ENCODE measurements at regions of chr4 and their contacts with region 1.

Region 1: GRCh38 chr4:21307709-21308108 is 607.5 kb downstream of the PACRGL start:
- DNase-seq: no peak
- ATAC-seq: no peak
- H3K4me3 ChIP-seq: no peak overlapping the region
- H3K27ac ChIP-seq: no peak overlapping the region
- H3K4me1 ChIP-seq: no peaks in the 10 kb centered on the region
- H3K27me3 ChIP-seq: peaks cover 0 to 14% of the 10 kb centered on the region in 2 experiments; a peak in 2 of 5 replicates
- CTCF ChIP-seq: no peak
- EP300 ChIP-seq: no peak
- POLR2A ChIP-seq: no peak
- RAD21 ChIP-seq: no peak

Region 2: DNA sequence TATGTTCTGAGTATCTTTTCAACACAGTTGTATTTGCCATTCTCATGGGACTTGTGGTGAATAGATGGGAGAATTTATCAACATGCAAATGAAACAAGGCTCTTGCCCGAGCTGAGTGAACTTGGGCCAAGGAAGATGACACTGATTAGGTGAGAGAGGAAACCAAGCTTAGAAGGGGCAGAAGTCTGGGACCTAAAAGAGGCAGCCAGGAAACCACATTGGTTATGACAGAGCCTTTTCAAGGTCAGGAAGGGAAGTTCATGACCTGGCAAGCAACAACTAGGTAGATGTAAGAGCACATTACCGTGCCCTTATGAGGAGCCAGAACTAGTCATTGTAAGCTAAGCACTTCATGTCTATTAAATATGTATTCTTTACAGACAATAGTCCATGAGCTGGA is 17.1 kb before region 1 on chr4:
- CTCF ChIA-PET with region 1: no interaction called
- POLR2A ChIA-PET with region 1: no interaction called
- in situ Hi-C with region 1: no loop called
- intact Hi-C with region 1: no loop called
- DNase-seq: no peak
- ATAC-seq: no peak
- H3K4me3 ChIP-seq: no peak overlapping the region
- H3K27ac ChIP-seq: no peak overlapping the region
- H3K4me1 ChIP-seq: no peaks in the 10 kb centered on the region
- H3K27me3 ChIP-seq: no peaks in the 10 kb centered on the region
- CTCF ChIP-seq: no peak
- EP300 ChIP-seq: no peak
- POLR2A ChIP-seq: no peak
- RAD21 ChIP-seq: no peak

Region 3: DNA sequence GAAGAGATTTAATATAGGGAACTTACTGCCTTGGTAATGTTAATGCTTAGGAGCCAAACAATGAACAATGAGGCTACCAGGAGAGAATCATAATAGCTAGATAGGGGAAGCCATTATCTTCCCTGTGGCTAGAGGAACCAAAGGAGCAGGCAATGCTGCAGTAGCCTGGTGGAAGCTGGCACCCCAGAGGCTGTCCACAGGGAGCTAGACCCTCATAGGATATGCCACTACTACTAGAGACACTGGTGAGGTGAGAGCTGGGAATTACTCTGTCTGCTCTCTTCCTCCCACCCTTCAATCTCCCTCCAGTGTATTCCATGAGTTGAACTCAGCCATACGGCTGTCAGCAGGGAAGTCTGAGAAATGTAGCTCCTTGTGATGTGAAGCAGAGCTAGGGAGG is 39.4 kb after region 1 on chr4:
- CTCF ChIA-PET with region 1: no interaction called
- POLR2A ChIA-PET with region 1: no interaction called
- in situ Hi-C with region 1: no loop called
- intact Hi-C with region 1: loop called (anchors 1 kb)
- DNase-seq: no peak
- ATAC-seq: no peak
- H3K4me3 ChIP-seq: no peak overlapping the region
- H3K27ac ChIP-seq: no peak overlapping the region
- H3K4me1 ChIP-seq: no peaks in the 10 kb centered on the region
- H3K27me3 ChIP-seq: no peaks in the 10 kb centered on the region
- CTCF ChIP-seq: no peak
- EP300 ChIP-seq: no peak
- POLR2A ChIP-seq: no peak
- RAD21 ChIP-seq: no peak

Region 4: DNA sequence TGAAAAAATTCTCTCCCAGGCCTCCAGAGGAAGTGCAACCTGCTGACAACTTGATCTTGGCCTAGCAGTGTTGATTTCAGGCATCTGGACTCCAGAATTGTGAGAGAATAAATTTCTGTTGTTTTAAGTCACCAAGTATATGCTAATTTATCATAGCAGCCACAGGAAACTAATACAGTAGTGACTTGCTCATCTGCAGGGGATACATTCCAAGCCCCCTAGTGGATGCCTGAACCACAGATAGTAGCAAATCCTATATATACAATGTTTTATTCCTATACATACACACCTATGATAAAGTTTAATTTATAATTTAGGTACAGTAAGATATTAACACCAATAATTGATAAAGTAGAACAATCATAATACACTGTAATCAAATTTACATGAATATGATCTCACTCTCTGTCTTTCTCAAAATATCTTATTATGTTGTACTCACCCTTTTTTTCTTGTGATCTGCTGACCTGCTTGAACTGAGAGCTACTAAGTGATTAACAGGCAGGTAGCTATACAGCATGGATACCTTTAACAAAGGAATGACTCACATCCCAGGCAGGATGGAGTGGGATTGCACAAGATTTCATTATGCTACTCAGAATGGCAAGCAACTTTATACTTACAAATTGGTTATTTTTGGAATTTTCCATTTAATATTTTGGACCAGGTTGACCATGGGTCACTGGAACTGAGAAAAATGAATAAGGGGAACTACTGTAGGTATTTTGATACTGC is 139.8 kb after region 1 on chr4:
- CTCF ChIA-PET with region 1: no interaction called
- POLR2A ChIA-PET with region 1: no interaction called
- in situ Hi-C with region 1: no loop called
- intact Hi-C with region 1: no loop called
- DNase-seq: no peak
- ATAC-seq: no peak
- H3K4me3 ChIP-seq: no peak overlapping the region
- H3K27ac ChIP-seq: no peak overlapping the region
- H3K4me1 ChIP-seq: no peaks in the 10 kb centered on the region
- H3K27me3 ChIP-seq: no peaks in the 10 kb centered on the region; a peak in 1 of 5 replicates
- CTCF ChIP-seq: no peak
- EP300 ChIP-seq: no peak
- POLR2A ChIP-seq: no peak
- RAD21 ChIP-seq: no peak

Region 5: GRCh38 chr4:21517460-21517859 is 209.8 kb after region 1 on chr4:
- CTCF ChIA-PET with region 1: no interaction called
- POLR2A ChIA-PET with region 1: no interaction called
- in situ Hi-C with region 1: no loop called
- intact Hi-C with region 1: no loop called
- DNase-seq: no peak
- ATAC-seq: no peak
- H3K4me3 ChIP-seq: no peak overlapping the region
- H3K27ac ChIP-seq: no peak overlapping the region
- H3K4me1 ChIP-seq: no peaks in the 10 kb centered on the region
- H3K27me3 ChIP-seq: no peaks in the 10 kb centered on the region
- CTCF ChIP-seq: no peak
- EP300 ChIP-seq: no peak
- POLR2A ChIP-seq: no peak
- RAD21 ChIP-seq: no peak